Right ventricle myocardium superior (tissue), 1 donor: ENCODE measurements at regions of chr5 and their contacts with region 1.

Region 1: DNA sequence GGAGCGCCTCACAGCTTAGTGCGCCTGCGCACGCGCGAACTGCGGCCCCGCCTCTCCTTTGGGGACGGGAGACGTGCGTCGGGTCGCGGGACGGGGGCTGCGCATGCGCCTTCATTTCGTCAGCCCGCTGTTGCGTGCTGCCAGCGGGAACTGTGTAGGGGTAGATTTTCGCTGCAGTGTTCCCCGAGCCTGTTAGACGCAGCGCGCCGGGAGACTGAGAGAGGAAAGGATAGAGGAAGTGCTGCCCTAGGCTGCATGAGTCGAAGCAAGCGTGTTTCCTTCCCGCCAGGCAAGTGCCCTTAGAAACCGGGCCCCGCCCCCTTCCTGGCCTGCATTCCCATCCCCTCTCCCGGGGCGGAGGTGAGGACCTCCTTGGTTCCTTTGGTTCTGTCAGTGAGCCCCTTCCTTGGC is 12.3 kb downstream of the ITGA1 start:
- DNase-seq: peak; percentile 97
- ATAC-seq: peak; percentile 97

Region 2: GRCh38 chr5:52840277-52841050 is 40.5 kb after region 1 on chr5:
- intact Hi-C with region 1: loop called (anchors 10 kb)
- DNase-seq: no peak
- ATAC-seq: no peak

Region 3: DNA sequence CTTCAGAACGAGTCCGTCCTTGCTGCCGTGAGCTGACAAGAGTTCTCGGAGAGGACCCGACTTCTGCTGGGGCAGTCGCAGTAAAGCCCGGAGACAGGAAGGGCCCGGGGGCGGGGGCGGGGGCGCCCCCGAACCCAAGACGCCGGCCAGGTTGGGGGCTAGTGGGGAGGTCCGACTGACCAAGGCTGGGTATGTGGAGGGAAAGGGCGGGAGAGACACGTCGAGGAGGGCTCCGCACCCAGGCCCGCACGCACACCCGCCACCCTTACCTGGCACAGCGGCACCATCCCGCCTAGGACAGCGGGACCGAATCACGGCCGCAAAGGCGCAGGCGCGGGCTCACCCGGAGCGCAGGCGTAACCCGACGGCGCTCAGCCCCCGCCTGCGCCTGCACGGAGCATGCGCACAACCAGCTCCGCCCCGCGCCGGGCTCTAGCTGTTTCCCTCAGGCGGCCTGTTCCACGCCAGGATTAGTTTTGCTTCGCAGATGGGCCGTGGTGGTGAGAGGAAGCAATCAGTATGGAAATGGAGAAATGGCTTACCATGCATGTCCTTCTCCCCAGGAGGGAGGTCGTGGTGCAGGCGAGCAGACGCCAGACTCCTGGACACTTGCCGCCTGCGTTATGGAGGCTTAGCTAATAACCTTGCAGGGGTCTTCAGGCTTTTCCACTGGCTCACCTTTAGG is 309.6 kb after region 1 on chr5 and contains the start of gene MOCS2:
- intact Hi-C with region 1: loop called (anchors 10 kb)
- DNase-seq: peak; percentile 96
- ATAC-seq: peak; percentile 100
- total RNA-seq, gene MOCS2: 94.1 TPM